Activated CD8-positive, alpha-beta memory T cell treated with anti-CD3 and anti-CD28 coated beads, Interleukin-2, amount 10 ng/mL, durations not matched to agents 7 days and 5 days (primary cell): ENCODE measurements at regions of chr18 and their contacts with region 1.

Region 1: GRCh38 chr18:23131693-23132319 is 3.5 kb upstream of the CABLES1 start:
- DNase-seq: peak; percentile 72
- ATAC-seq: peak; percentile 52
- H3K4me3 Mint-ChIP-seq: no peak overlapping the region
- H3K27ac Mint-ChIP-seq: no peak overlapping the region
- H3K4me1 Mint-ChIP-seq: peaks cover 18% of the 10 kb centered on the region
- H3K27me3 Mint-ChIP-seq: peaks cover 34% of the 10 kb centered on the region

Region 2: DNA sequence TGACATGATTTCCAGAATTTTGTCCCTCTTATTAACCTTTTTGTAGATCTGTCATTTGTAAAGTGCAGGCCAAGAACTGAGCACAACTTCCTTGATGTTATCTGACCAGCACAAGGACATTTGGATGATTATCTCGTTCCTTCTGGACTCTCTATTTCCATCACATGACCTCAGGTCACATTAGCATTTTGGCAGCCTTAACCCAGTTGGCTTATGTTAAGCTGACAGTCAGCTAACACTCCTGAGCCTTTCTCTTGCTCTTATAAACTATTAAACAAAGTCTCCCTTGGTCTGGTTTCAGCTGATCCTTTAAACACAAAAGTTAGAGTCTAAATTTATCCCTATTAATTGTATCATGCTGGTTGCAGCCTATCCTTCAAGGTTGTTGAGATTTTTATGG is 365.9 kb before region 1 on chr18:
- CTCF ChIA-PET with region 1: no interaction called
- DNase-seq: no peak
- ATAC-seq: no peak
- H3K4me3 Mint-ChIP-seq: no peak overlapping the region
- H3K27ac Mint-ChIP-seq: no peak overlapping the region
- H3K4me1 Mint-ChIP-seq: no peaks in the 10 kb centered on the region
- H3K27me3 Mint-ChIP-seq: peaks cover 35% of the 10 kb centered on the region

Region 3: DNA sequence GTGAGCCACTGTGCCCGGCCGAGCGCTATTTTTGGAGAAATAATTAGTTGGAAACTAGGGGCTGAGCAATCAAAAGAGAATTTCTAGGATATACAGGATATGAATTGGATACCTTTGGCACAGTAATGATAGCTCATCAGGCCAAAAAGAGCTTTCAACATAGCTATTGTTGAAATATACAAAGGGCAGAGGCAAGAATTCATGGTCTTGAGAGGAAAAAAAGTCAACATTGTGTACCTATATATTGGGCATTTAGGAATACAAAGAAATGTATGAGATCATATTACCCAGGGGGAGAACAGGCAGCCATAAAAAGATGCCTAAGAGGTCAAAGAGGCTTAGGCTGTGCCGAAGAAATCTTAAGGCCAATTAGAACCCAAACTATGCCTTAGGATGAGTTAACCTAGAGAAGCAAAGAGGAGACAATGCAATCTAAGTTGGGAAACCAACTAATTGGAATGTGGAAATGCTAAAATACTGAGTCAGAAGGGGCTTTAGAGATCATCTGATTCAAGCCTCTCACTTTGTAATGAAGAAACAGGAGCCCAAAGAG is 99.7 kb before region 1 on chr18:
- CTCF ChIA-PET with region 1: interaction called, 12 read pairs
- DNase-seq: no peak
- ATAC-seq: no peak
- H3K4me3 Mint-ChIP-seq: no peak overlapping the region
- H3K27ac Mint-ChIP-seq: no peak overlapping the region
- H3K4me1 Mint-ChIP-seq: peaks cover 5% of the 10 kb centered on the region
- H3K27me3 Mint-ChIP-seq: no peaks in the 10 kb centered on the region

Region 4: GRCh38 chr18:23356915-23357601 is 225.3 kb after region 1 on chr18:
- CTCF ChIA-PET with region 1: interaction called, 81 read pairs
- DNase-seq: no peak
- ATAC-seq: no peak
- H3K4me3 Mint-ChIP-seq: no peak overlapping the region
- H3K27ac Mint-ChIP-seq: no peak overlapping the region
- H3K4me1 Mint-ChIP-seq: peaks cover 24% of the 10 kb centered on the region
- H3K27me3 Mint-ChIP-seq: no peaks in the 10 kb centered on the region

Region 5: GRCh38 chr18:23377669-23378301 is 246.0 kb after region 1 on chr18:
- CTCF ChIA-PET with region 1: interaction called, 13 read pairs
- DNase-seq: no peak
- ATAC-seq: peak; percentile 85
- H3K4me3 Mint-ChIP-seq: no peak overlapping the region
- H3K27ac Mint-ChIP-seq: peak overlapping the region; percentile 13
- H3K4me1 Mint-ChIP-seq: peaks cover 18% of the 10 kb centered on the region
- H3K27me3 Mint-ChIP-seq: no peaks in the 10 kb centered on the region